ENCODE measurements at regions of chr4 and their contacts with region 1.

Region 1: DNA sequence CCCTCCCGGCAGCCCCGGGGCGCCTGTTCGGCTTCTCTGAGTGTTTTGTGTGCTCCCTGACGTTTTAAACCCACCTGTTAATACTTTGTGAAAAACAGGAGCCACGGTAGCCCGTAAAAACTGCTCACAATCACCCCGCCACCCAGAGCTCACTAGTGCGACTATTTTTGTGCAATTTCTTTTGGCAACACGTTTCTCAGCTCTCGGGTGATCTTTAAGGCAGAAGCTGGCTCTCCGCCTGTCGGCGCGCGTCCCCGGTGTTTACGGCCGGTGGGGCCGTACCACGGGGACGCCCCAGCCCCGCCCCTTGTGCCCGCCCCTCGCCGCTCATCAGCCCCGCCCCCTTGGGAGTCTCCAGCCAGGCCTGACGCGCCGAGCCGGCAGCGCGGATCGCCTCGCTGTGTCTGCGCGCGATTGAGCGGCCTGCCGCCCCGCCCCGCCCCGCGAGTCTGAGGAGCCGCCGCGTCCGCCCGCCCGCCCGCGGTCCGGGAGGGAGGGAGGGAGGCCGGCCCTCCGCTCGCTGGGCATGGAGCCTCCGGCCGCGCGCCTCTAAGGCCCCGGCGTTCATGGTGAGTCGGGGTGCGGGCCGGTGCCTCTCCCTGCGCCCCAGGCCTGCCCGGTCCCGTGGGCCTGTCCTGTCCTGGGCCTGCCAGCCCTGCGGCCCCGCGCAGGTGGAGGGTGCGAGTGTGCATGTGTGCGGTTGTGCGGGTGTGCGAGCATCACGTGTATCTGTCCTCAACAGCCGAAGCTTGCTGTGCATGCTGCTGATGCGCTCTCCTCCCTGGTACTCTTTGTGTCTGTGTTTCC is 56.2 kb upstream of the TADA2B start:
- DNase-seq: peak; percentile 93
- H3K4me3 ChIP-seq: peak overlapping the region; percentile 82 to 95 (median 95)
- H3K27ac ChIP-seq: peak overlapping the region; percentile 90
- H3K4me1 ChIP-seq: peaks cover 42% of the 10 kb centered on the region
- H3K27me3 ChIP-seq: no peaks in the 10 kb centered on the region
- CTCF ChIP-seq: peak in 1 of 2 donors; percentile 36

Region 2: DNA sequence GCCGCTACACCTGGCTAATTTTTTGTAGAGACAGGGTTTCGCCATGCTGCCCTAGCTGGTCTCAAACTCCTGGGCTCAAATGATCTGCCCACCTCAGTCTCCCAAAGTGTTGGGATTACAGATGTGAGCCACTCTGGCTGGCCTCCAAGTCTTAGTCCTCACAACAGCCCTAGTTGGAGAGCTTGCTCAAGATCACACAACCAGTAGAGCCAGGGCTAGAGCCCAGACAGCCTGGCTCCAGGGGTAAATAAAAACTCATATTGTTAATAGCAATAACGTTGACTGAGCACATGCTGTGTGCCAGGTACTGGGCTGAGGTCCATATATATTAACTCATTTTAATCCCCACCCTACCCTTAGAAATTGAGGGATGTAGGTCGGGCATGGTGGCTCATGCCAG is 779.4 kb before region 1 on chr4:
- CTCF ChIA-PET with region 1: no interaction called
- dilution Hi-C with region 1: no loop called
- in situ Hi-C with region 1: no loop called
- intact Hi-C with region 1: no loop called
- DNase-seq: no peak
- H3K4me3 ChIP-seq: no peak overlapping the region
- H3K27ac ChIP-seq: no peak overlapping the region
- H3K4me1 ChIP-seq: no peaks in the 10 kb centered on the region
- H3K27me3 ChIP-seq: no peaks in the 10 kb centered on the region
- CTCF ChIP-seq: no peak

Region 3: GRCh38 chr4:7042697-7043464 is 55.9 kb after region 1 on chr4 and contains the start of gene TADA2B:
- CTCF ChIA-PET with region 1: no interaction called
- dilution Hi-C with region 1: no loop called
- in situ Hi-C with region 1: no loop called
- intact Hi-C with region 1: loop called (anchors 1 kb)
- DNase-seq: peak; percentile 98
- H3K4me3 ChIP-seq: peak within 1 kb of the TSS; percentile 92 to 98 (median 93)
- H3K27ac ChIP-seq: peak within 1 kb of the TSS; percentile 87
- H3K4me1 ChIP-seq: peaks cover 20% of the 10 kb centered on the region
- H3K27me3 ChIP-seq: no peaks in the 10 kb centered on the region
- CTCF ChIP-seq: peak; percentile 23 to 31
- total RNA-seq, gene TADA2B: 13.3 to 17.2 TPM

Region 4: DNA sequence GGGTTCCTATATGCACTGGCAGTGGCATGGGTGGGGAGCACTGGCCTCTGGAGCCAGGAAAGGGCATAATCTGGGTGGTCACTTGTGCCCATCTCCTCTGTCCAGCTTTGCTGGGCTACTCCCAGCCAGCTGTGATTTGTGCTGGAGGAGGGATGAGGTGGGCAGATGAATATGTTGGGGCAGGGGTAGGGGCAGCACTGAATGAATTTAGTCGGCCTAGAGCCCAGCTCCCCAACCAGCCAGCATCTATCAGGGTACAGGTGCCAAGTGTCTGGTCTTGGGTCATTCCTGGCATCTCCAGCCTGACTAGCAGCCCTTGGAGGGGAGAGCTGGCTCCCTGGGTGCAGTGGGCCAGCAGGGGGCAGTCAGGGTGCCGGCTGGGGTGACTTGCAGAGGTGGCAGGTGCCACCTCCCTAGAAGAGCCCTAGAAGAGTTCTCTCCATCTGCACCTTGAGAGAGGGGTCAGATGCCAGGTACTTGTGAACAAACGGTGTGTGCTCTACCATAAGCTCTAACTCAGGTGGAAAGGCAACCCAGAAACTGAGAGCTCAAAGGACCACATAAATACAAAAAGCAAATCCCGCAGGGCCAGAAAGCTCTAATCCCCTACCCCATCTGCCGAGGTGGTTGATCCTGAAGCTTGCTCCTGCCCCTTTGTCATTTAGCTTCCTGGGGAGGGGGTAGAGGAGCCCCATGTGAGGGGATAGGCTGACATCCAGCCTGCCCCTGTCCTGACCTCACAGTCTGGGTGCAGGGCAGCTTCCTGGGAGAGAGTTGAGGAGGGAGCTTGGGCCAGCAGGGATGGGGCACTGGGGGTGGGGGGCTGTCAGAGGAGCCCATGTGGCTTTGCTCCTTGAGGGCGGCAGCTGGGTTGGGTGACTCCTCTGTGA is 207.5 kb after region 1 on chr4:
- CTCF ChIA-PET with region 1: no interaction called
- dilution Hi-C with region 1: no loop called
- in situ Hi-C with region 1: no loop called
- intact Hi-C with region 1: no loop called
- DNase-seq: no peak
- H3K4me3 ChIP-seq: no peak overlapping the region
- H3K27ac ChIP-seq: no peak overlapping the region
- H3K4me1 ChIP-seq: peaks cover 15% of the 10 kb centered on the region
- H3K27me3 ChIP-seq: peaks cover 12% of the 10 kb centered on the region
- CTCF ChIP-seq: peak; percentile 31 to 69

Measured in mammary epithelial cell (primary cell).